Endothelial cell of umbilical vein (primary cell): ENCODE measurements at regions of chr4 and their contacts with region 1.

Region 1: GRCh38 chr4:37452952-37453280 is 208.4 kb downstream of the NWD2 start:
- DNase-seq: peak; percentile 68
- H3K4me3 ChIP-seq: no peak overlapping the region
- H3K27ac ChIP-seq: no peak overlapping the region
- H3K4me1 ChIP-seq: peaks cover 9% of the 10 kb centered on the region
- H3K27me3 ChIP-seq: peaks cover 28 to 36% of the 10 kb centered on the region in 2 experiments
- CTCF ChIP-seq: peak; percentile 36 to 54
- POLR2A ChIP-seq: no peak

Region 2: GRCh38 chr4:37124800-37125199 is 328.1 kb before region 1 on chr4:
- CTCF ChIA-PET with region 1: no interaction called
- POLR2A ChIA-PET with region 1: no interaction called
- dilution Hi-C with region 1: no loop called
- intact Hi-C with region 1: no loop called
- DNase-seq: no peak
- H3K4me3 ChIP-seq: no peak overlapping the region
- H3K27ac ChIP-seq: no peak overlapping the region
- H3K4me1 ChIP-seq: no peaks in the 10 kb centered on the region
- H3K27me3 ChIP-seq: no peaks in the 10 kb centered on the region
- CTCF ChIP-seq: no peak
- POLR2A ChIP-seq: no peak

Region 3: DNA sequence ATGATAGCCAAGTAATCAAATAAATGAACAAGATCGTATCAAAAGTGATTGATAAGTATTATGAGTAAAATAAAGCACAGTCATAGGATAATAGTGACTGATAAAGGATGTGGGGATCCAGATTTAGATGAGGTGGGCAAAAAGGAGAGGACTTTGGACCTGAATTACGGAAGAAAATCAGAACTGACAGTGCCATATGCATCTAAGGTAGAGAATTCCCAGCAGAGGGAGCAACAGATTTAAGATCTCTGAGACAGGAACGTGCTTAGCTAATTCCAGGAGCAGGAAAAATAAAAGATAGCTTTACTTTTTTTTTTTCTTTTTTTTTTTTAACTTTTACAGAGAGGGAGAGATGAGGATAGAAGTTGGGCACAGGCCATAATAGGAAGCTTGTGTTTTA is 18.4 kb before region 1 on chr4:
- CTCF ChIA-PET with region 1: interaction called, 10 read pairs
- POLR2A ChIA-PET with region 1: no interaction called
- dilution Hi-C with region 1: no loop called
- intact Hi-C with region 1: no loop called
- DNase-seq: no peak
- H3K4me3 ChIP-seq: no peak overlapping the region
- H3K27ac ChIP-seq: no peak overlapping the region
- H3K4me1 ChIP-seq: no peaks in the 10 kb centered on the region
- H3K27me3 ChIP-seq: no peaks in the 10 kb centered on the region
- CTCF ChIP-seq: no peak
- POLR2A ChIP-seq: no peak

Region 4: GRCh38 chr4:37561803-37562207 is 108.9 kb after region 1 on chr4:
- CTCF ChIA-PET with region 1: interaction called, 181 read pairs
- POLR2A ChIA-PET with region 1: no interaction called
- dilution Hi-C with region 1: no loop called
- intact Hi-C with region 1: loop called (anchors 1 kb)
- DNase-seq: peak; percentile 42
- H3K4me3 ChIP-seq: no peak overlapping the region
- H3K27ac ChIP-seq: no peak overlapping the region
- H3K4me1 ChIP-seq: peaks cover 6% of the 10 kb centered on the region
- H3K27me3 ChIP-seq: no peaks in the 10 kb centered on the region
- CTCF ChIP-seq: no peak
- POLR2A ChIP-seq: no peak

Region 5: DNA sequence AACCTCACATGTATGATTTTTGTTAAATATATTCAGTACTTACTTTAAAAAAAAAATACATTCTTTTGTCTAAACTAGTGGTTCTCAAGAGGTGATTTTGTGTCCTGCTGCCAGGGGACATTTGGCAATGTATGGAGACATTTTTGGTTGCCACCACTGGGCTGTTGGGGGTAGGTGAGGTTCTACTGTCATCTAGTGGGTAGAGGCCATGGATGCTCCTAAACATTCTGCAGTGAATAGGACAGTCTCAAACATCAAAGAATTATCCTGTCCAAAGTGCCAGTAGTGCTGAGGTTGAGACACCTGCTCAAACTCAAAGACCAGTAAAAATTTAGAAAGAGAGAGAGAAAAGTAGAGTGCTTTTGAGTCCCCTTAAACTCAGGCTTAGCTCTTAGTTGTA is 340.6 kb after region 1 on chr4:
- CTCF ChIA-PET with region 1: interaction called, 11 read pairs
- POLR2A ChIA-PET with region 1: no interaction called
- dilution Hi-C with region 1: no loop called
- intact Hi-C with region 1: loop called (anchors 2 kb)
- DNase-seq: peak; percentile 13
- H3K4me3 ChIP-seq: no peak overlapping the region
- H3K27ac ChIP-seq: no peak overlapping the region
- H3K4me1 ChIP-seq: no peaks in the 10 kb centered on the region
- H3K27me3 ChIP-seq: peaks cover 3 to 7% of the 10 kb centered on the region in 2 experiments
- CTCF ChIP-seq: peak; percentile 30 to 52
- POLR2A ChIP-seq: no peak

Region 6: GRCh38 chr4:38030023-38030422 is 577.1 kb after region 1 on chr4:
- CTCF ChIA-PET with region 1: interaction called, 6 read pairs
- POLR2A ChIA-PET with region 1: no interaction called
- dilution Hi-C with region 1: no loop called
- intact Hi-C with region 1: loop called (anchors 1 kb)
- DNase-seq: no peak
- H3K4me3 ChIP-seq: no peak overlapping the region
- H3K27ac ChIP-seq: no peak overlapping the region
- H3K4me1 ChIP-seq: peaks cover 3% of the 10 kb centered on the region
- H3K27me3 ChIP-seq: no peaks in the 10 kb centered on the region
- CTCF ChIP-seq: no peak
- POLR2A ChIP-seq: no peak